ENCODE measurements at regions of chr1 and their contacts with region 1.

Region 1: GRCh38 chr1:165367375-165367993 is 11.0 kb upstream of the LMX1A start:
- DNase-seq: peak; percentile 51 to 81 (median 74)
- H3K4me3 ChIP-seq: no peak overlapping the region
- H3K4me3 Mint-ChIP-seq: no peak overlapping the region
- H3K27ac ChIP-seq: no peak overlapping the region
- H3K27ac Mint-ChIP-seq: no peak overlapping the region
- H3K4me1 ChIP-seq: no peaks in the 10 kb centered on the region
- H3K4me1 Mint-ChIP-seq: peaks cover 0 to 3% (median 0%) of the 10 kb centered on the region in 3 donors
- H3K27me3 ChIP-seq: peaks cover 3% of the 10 kb centered on the region
- H3K27me3 Mint-ChIP-seq: peaks cover 29 to 78% of the 10 kb centered on the region in 2 donors

Region 2: GRCh38 chr1:165383067-165383466 is 15.6 kb after region 1 on chr1:
- CTCF ChIA-PET with region 1: interaction called, 52 read pairs
- POLR2A ChIA-PET with region 1: no interaction called
- DNase-seq: no peak
- H3K4me3 ChIP-seq: no peak overlapping the region
- H3K4me3 Mint-ChIP-seq: no peak overlapping the region
- H3K27ac ChIP-seq: no peak overlapping the region
- H3K27ac Mint-ChIP-seq: no peak overlapping the region
- H3K4me1 ChIP-seq: no peaks in the 10 kb centered on the region
- H3K4me1 Mint-ChIP-seq: no peaks in the 10 kb centered on the region
- H3K27me3 ChIP-seq: no peaks in the 10 kb centered on the region
- H3K27me3 Mint-ChIP-seq: peaks cover 21 to 61% of the 10 kb centered on the region in 2 donors

Region 3: DNA sequence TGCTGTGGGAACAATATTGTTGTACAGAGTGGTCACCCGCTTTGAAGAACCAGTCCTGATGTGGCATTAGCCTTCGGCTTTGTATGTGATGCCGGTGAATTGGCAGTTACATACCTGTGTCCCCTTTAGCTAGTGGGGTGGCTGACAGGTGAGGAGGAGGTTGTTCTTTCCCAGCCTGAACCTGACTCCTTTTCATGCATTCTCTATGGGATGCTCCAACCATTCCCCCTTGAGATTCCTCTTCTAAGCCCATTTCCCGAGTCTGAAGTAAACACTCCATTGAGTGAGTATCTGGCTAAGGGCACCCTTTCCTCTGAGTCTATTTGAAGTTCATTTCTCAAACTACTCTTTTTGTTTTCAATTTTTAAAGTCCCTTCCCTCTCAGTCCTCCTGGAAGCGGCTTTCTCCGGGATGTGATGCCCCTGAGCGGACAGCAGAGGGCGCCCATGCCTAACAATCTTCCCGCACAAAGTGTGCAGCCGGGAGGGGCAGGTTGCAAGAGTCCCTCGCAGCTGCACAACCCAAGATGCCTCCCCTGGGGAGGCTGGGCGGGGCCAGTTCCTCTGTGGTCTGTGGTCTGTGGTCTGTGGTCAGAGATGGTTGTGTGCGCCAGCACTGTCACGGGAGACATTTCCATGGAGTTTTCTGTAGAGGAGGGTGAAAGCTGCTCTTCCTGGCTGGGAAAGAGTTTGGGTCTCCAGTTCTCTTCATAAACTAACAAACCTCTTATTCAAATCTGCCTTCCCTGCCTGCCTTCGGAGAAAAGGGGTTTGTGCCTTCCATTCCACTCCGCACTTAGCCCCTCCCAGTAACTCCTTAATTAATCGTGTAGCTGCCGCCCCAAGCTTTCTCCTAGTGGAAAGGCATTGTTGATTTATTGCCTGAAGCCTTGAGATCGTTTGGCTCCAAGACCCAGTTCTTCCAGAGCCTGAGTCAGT is 25.4 kb after region 1 on chr1:
- CTCF ChIA-PET with region 1: interaction called, 17 read pairs
- POLR2A ChIA-PET with region 1: no interaction called
- DNase-seq: peak; percentile 85 to 94 (median 89)
- H3K4me3 ChIP-seq: peak overlapping the region; percentile 5
- H3K4me3 Mint-ChIP-seq: peak overlapping the region; percentile 55 to 84 (median 79)
- H3K27ac ChIP-seq: no peak overlapping the region
- H3K27ac Mint-ChIP-seq: peak overlapping the region in 7 of 8 donors; percentile 59 to 95 (median 81)
- H3K4me1 ChIP-seq: peaks cover 16% of the 10 kb centered on the region
- H3K4me1 Mint-ChIP-seq: peaks cover 11 to 19% (median 15%) of the 10 kb centered on the region in 3 donors
- H3K27me3 ChIP-seq: peaks cover 7% of the 10 kb centered on the region
- H3K27me3 Mint-ChIP-seq: peaks cover 25 to 71% of the 10 kb centered on the region in 2 donors

Region 4: GRCh38 chr1:165408518-165408917 is 41.0 kb after region 1 on chr1:
- CTCF ChIA-PET with region 1: no interaction called
- POLR2A ChIA-PET with region 1: no interaction called
- DNase-seq: no peak
- H3K4me3 ChIP-seq: no peak overlapping the region
- H3K4me3 Mint-ChIP-seq: no peak overlapping the region
- H3K27ac ChIP-seq: no peak overlapping the region
- H3K27ac Mint-ChIP-seq: no peak overlapping the region
- H3K4me1 ChIP-seq: no peaks in the 10 kb centered on the region
- H3K4me1 Mint-ChIP-seq: peaks cover 0 to 2% (median 0%) of the 10 kb centered on the region in 3 donors
- H3K27me3 ChIP-seq: no peaks in the 10 kb centered on the region
- H3K27me3 Mint-ChIP-seq: peaks cover 12 to 38% of the 10 kb centered on the region in 2 donors

Region 5: DNA sequence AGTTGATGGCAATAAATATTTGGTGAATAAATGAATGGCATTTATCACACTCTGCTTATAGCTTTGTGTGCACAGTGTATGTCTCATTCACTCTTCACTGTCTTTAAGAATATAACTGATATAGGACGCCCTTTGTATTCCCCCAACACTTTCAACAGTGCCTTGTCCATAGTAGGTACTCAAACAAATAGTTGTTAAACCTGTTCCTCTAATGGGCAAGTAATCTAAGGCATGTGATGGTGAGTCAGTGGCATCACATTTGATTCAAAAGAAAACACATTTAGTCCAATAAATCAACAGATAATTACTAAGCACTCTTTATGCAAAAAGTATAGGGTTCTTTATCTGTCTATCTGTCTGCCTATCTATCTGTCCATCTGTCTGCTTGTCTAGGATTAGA is 88.6 kb after region 1 on chr1:
- CTCF ChIA-PET with region 1: no interaction called
- POLR2A ChIA-PET with region 1: no interaction called
- DNase-seq: no peak
- H3K4me3 ChIP-seq: no peak overlapping the region
- H3K4me3 Mint-ChIP-seq: no peak overlapping the region
- H3K27ac ChIP-seq: no peak overlapping the region
- H3K27ac Mint-ChIP-seq: no peak overlapping the region
- H3K4me1 ChIP-seq: no peaks in the 10 kb centered on the region
- H3K4me1 Mint-ChIP-seq: no peaks in the 10 kb centered on the region
- H3K27me3 ChIP-seq: no peaks in the 10 kb centered on the region
- H3K27me3 Mint-ChIP-seq: peaks cover 5 to 32% of the 10 kb centered on the region in 2 donors

Measured in CD8-positive, alpha-beta memory T cell (primary cell).